A549 (cell line): ENCODE measurements at regions of chr4 and their contacts with region 1.

Region 1: GRCh38 chr4:1356181-1356998 is 9.4 kb downstream of the UVSSA start:
- DNase-seq: peak; percentile 61
- ATAC-seq: peak; percentile 51 to 63; a peak in 3 of 6 replicates
- H3K4me3 ChIP-seq: no peak overlapping the region
- H3K27ac ChIP-seq: no peak overlapping the region
- H3K4me1 ChIP-seq: 0 out of 3 replicates have a peak, but pooled peaks cover 3% of the 10 kb centered on the region
- CTCF ChIP-seq: peak; percentile 49
- EP300 ChIP-seq: no peak
- POLR2A ChIP-seq: no peak
- RAD21 ChIP-seq: peak; percentile 59 to 64

Region 2: DNA sequence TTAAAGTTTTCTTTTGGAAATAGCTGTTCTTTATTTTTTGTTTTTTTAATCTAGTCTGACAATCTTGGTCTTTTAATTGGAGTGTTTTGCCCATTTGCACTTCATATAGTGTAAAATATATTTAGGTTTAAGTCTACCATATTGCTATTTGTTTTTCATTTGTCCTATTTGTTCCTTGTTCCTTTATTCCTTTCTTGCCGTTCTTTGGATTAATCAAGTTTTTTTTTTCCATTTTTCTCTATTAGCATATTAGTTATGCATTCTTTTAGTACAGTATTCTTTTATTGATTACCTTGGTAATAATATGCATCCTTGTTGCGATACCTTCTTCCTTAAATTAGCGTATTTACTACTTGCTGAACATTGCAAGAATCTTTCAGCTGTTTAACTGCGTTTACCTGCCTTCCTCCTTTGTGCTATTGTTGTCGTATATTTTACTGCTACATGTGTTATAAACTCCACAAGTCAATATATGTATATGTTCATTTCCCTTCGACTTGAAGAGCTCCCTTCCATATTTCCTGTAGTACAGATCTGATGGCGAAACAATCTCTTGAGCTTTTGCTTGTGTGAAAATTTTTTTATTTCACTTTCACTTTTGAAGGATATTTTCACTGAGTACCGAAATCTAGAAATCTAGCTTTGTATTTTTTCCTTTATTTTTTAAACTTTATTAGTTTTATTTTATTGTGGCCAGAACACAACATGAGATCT is 219.2 kb before region 1 on chr4:
- CTCF ChIA-PET with region 1: no interaction called
- POLR2A ChIA-PET with region 1: no interaction called
- DNase-seq: no peak
- ATAC-seq: no peak
- H3K4me3 ChIP-seq: no peak overlapping the region
- H3K27ac ChIP-seq: no peak overlapping the region
- H3K4me1 ChIP-seq: no peaks in the 10 kb centered on the region
- CTCF ChIP-seq: no peak
- EP300 ChIP-seq: no peak
- POLR2A ChIP-seq: no peak
- RAD21 ChIP-seq: no peak

Region 3: DNA sequence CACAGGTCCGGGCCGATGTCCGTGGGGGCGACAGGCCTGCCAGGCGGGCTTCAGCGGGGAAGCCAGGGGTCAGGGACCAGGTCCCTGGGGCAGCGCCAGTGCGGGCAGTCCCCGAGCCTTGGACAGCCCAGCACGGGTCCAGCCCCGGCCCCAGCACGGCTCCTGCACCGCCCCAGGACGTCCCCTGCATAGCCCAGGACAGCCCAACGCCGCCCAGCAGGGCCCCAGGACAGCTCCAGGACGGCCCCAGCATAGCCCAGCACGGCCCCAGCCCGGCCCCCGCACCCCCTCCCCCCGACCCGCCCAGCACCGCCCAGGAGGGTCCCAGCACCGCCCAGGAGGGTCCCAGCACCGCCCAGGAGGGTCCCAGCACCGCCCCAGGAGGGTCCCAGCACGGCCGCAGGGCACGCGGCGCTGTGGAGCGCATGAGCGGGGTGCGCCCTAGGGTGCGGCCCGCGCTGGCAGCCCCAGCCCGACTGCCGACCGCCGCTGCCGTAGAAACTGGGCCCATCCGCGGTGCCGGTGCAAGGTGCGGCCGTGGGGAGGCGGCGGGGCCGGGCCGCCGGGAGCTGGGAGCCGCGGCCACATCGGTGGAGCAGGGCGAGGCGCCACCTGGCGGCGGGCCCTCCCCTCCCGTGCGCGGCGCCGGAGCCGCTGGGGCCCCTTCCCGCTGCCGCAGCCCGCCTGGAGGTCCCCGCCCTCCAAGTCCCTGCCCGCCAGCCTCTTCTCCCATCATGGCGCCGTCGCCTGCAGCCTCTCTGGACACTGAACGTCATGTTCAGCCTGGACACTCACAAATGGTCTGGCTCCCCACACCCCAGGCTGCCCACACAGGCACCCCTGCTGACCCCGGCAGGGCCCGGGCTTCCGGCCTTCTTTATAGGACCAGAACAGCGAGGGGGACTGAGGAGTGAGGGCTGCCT is 156.6 kb after region 1 on chr4:
- CTCF ChIA-PET with region 1: interaction called, 20 read pairs
- POLR2A ChIA-PET with region 1: no interaction called
- DNase-seq: peak; percentile 25 to 48
- ATAC-seq: peak; percentile 78 to 90
- H3K4me3 ChIP-seq: peak overlapping the region; percentile 30
- H3K27ac ChIP-seq: peak overlapping the region; percentile 50 to 89; a peak in 5 of 6 replicates
- H3K4me1 ChIP-seq: no peaks in the 10 kb centered on the region
- CTCF ChIP-seq: peak; percentile 77
- EP300 ChIP-seq: no peak
- POLR2A ChIP-seq: no peak
- RAD21 ChIP-seq: peak; percentile 17 to 57; a peak in 4 of 5 replicates